ENCODE measurements at regions of chr18 and their contacts with region 1.

Region 1: DNA sequence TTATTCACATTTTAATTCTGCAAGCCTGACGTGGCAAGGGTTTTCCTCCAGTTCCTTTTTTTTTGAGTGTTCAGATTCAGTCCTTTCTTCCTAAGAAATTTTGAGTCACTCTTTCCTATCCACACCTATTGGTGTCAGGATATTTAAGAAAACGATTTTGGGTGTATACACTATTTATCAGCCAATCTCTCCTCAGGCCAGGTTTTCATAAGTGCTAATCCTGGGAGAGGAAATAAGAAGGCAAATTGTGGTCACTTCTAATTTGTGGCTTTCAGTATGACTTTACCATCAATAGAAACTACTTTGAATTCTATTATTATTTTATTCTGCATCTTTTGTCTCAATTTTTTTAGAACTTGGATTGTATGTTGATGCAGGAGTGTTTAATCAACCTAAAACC is 174.4 kb downstream of the DSEL start:
- DNase-seq: no peak
- ATAC-seq: no peak
- H3K4me3 ChIP-seq: no peak overlapping the region
- H3K27ac ChIP-seq: no peak overlapping the region
- H3K4me1 ChIP-seq: no peaks in the 10 kb centered on the region
- H3K27me3 ChIP-seq: no peaks in the 10 kb centered on the region
- CTCF ChIP-seq: no peak
- POLR2A ChIP-seq: no peak
- RAD21 ChIP-seq: no peak

Region 2: DNA sequence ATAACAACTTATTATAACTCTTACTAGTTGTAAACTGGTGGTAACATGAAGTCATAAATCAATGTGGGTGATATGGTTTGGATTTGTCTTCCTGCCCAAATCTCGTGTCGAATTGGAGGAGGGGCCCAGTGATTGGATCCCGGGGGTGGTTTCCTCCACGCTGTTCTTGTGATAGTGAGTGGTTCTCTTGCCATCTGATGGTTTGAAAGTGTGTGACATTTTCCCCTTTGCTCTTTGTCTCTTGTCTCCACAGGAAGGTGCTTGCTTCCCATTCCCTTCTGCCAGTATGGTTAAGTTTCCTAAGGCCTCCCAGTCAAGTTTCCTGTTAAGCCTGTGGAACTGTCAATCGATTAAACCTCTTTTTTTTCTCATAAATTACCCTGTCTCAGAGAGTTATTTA is 147.3 kb before region 1 on chr18:
- CTCF ChIA-PET with region 1: no interaction called
- POLR2A ChIA-PET with region 1: no interaction called
- dilution Hi-C with region 1: no loop called
- in situ Hi-C with region 1: no loop called
- intact Hi-C with region 1: no loop called
- DNase-seq: no peak
- ATAC-seq: no peak
- H3K4me3 ChIP-seq: no peak overlapping the region
- H3K27ac ChIP-seq: no peak overlapping the region
- H3K4me1 ChIP-seq: no peaks in the 10 kb centered on the region
- H3K27me3 ChIP-seq: no peaks in the 10 kb centered on the region
- CTCF ChIP-seq: no peak
- POLR2A ChIP-seq: no peak
- RAD21 ChIP-seq: no peak

Region 3: DNA sequence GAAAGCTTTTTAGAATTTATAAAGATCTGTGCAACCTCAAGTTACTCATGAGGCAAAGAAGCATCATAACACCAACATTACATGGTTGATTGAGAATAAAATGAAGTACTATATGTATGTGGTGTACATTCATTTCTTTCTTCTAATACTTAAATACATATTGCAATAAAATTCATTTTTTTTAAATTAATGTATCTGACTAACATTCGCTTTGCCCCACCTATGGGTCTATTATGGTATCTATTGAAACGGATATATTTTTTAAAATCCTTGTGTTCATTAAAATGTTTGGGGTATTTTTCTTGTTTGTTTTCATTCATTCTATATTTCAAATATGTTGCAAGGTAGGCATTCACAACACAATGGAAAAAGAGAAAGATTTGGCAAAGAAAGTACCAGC is 63.2 kb before region 1 on chr18:
- CTCF ChIA-PET with region 1: no interaction called
- POLR2A ChIA-PET with region 1: no interaction called
- dilution Hi-C with region 1: no loop called
- in situ Hi-C with region 1: no loop called
- intact Hi-C with region 1: loop called (anchors 10 kb)
- DNase-seq: no peak
- ATAC-seq: no peak
- H3K4me3 ChIP-seq: no peak overlapping the region
- H3K27ac ChIP-seq: no peak overlapping the region
- H3K4me1 ChIP-seq: peaks cover 3% of the 10 kb centered on the region
- H3K27me3 ChIP-seq: no peaks in the 10 kb centered on the region
- CTCF ChIP-seq: no peak
- POLR2A ChIP-seq: no peak
- RAD21 ChIP-seq: no peak

Region 4: DNA sequence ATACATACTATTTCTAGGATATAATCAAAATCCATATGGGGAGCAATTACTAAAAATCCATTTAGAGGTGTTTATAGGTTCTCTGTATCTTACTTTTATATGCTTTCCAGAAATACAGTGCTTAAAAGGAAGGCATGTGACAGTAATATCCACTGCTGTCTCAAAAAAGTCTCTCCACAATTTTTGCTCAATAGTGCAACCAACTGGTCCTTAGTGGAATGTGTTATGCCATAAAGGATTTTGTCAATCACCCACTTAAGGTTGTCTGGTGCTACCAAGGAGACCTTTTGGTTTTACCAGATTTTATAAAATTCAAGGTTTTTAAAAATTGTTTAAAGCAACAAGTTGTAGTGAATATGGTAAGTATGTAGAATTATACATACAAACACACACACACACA is 502.9 kb after region 1 on chr18:
- CTCF ChIA-PET with region 1: no interaction called
- POLR2A ChIA-PET with region 1: no interaction called
- dilution Hi-C with region 1: no loop called
- in situ Hi-C with region 1: no loop called
- intact Hi-C with region 1: no loop called
- DNase-seq: no peak
- ATAC-seq: no peak
- H3K4me3 ChIP-seq: no peak overlapping the region
- H3K27ac ChIP-seq: no peak overlapping the region
- H3K4me1 ChIP-seq: no peaks in the 10 kb centered on the region
- H3K27me3 ChIP-seq: no peaks in the 10 kb centered on the region
- CTCF ChIP-seq: no peak
- POLR2A ChIP-seq: no peak
- RAD21 ChIP-seq: 0 out of 2 replicates have a peak, but pooled peaks have one; percentile 7